ENCODE measurements at regions of chr1 and their contacts with region 1.

Region 1: GRCh38 chr1:207963427-207964194 is 52.7 kb upstream of the CD34 start:
- DNase-seq: peak; percentile 46
- H3K4me3 ChIP-seq: peak overlapping the region; percentile 63
- H3K27ac ChIP-seq: no peak overlapping the region
- H3K27me3 ChIP-seq: no peaks in the 10 kb centered on the region
- CTCF ChIP-seq: peak; percentile 84

Region 2: DNA sequence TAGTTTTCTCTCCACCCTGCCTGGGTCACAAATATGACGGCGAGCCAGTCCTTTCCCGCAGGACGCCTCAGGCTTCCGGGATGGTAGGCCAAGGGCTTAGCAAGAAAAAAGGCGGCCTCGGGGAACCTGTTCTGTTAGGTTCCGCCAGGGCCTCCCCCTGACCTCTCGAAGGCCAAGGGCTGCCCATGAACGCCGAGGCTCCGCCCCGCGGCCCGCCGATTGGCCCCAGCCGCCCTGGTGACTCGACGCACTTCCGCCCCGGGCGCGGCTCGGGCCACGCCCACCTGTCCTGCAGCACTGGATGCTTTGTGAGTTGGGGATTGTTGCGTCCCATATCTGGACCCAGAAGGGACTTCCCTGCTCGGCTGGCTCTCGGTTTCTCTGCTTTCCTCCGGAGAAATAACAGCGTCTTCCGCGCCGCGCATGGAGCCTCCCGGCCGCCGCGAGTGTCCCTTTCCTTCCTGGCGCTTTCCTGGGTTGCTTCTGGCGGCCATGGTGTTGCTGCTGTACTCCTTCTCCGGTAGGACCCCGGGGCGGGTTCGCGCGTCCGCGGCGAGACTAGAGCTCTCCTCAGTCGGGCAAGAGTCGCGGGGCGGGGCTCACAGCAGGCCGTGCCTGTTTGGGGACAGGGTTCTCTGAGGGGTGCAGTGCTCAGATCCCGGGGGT is 211.7 kb before region 1 on chr1 and contains the start of gene CD46:
- CTCF ChIA-PET with region 1: interaction called, 15 read pairs
- POLR2A ChIA-PET with region 1: no interaction called
- DNase-seq: peak; percentile 61
- H3K4me3 ChIP-seq: peak within 1 kb of the TSS; percentile 96
- H3K27ac ChIP-seq: peak within 1 kb of the TSS; percentile 61
- H3K27me3 ChIP-seq: no peaks in the 10 kb centered on the region
- CTCF ChIP-seq: no peak
- polyA plus RNA-seq, gene CD46: 112 and 148 TPM in 2 replicates

Region 3: DNA sequence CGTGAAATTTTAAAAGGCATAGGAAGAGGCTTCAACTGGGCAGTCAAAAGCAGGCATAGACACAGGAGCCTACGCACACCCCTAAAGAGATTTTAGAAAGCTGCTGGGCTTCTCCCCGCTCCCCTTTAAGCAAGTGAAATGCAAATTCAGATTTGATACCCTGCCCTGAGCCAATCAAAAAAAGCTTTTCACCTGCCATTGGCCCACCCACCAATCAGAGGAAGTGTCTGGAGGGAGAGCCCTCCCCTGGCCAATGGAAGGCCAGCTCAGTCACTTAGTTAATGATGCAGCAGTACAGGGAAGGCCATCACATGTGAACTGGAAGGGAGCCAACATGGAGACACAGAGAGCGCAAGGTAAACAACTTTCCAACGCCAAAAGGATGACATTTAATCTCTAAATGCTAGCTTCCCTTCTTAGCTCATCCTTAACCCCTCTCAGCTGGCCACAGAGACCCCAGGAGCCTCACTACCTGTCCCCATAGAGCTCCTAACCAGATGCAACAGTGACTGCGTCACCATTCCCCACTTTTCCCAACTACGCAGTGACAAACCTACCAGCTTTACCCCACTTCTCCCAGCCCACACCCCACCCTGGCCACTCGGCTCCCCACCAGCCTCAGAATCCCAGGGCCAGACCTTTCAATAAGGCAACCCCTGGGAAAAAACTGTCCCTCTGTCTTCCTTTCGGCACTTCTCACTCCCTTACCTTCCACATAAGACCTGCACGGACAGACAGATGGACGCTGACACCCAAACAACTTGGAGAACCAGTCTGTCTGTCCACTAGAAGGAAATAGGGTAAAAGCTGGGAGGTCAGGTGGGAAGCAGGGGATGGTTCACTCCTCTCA is 140.8 kb before region 1 on chr1:
- CTCF ChIA-PET with region 1: interaction called, 27 read pairs
- POLR2A ChIA-PET with region 1: no interaction called
- DNase-seq: no peak
- H3K4me3 ChIP-seq: no peak overlapping the region
- H3K27ac ChIP-seq: peak overlapping the region; percentile 21
- H3K27me3 ChIP-seq: no peaks in the 10 kb centered on the region
- CTCF ChIP-seq: no peak

Region 4: DNA sequence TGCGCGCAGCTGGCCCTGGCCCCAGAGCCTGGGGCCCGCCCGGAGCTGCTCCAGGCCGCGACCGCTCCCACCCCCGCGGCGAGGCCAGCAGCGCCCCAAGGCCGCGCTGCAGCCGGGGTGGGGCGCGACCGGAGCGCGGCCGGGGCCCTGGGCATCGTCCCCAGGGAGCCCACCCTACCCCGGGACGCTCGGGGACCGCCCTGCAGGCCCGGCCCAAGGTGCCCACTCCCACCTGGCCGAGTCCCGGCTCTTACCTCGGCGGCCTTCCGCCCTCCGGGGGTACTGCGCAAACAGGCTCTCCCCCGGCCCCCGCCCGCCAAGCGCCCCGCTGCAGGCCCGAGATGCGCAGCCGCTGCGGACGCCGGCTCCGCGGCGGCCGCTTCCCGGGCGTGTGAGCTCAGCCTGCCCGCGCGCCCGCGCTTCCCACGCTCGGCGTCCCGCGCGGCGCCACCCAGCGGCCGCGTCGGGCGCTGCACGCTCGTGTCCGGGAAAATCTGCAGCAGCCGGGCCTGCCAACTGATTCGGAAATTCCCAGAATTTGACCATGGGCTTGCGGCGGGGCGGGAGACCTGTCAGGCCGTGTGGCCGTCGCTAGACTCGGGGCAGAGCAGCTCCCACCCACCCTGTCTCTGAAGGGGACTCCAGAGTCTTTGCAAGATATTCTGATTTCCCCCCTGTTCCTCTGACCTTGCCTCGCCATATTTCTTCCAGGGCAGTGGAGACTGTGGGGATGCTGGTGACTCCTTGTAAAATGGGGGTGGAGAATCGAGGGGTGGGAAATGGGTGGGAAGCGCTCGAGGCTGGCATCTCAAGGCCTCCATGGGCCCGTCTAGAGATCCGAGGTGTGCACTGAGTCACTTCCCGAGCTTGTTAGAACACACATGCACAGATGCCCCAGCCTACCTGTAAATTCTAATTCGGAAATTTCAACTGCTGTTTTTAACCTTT is 94.6 kb before region 1 on chr1:
- CTCF ChIA-PET with region 1: interaction called, 36 read pairs
- POLR2A ChIA-PET with region 1: interaction called, 5 read pairs
- DNase-seq: no peak
- H3K4me3 ChIP-seq: peak overlapping the region; percentile 71
- H3K27ac ChIP-seq: no peak overlapping the region
- H3K27me3 ChIP-seq: no peaks in the 10 kb centered on the region
- CTCF ChIP-seq: peak; percentile 65

Region 5: GRCh38 chr1:207935166-207935583 is 28.4 kb before region 1 on chr1:
- CTCF ChIA-PET with region 1: interaction called, 39 read pairs
- POLR2A ChIA-PET with region 1: no interaction called
- DNase-seq: no peak
- H3K4me3 ChIP-seq: no peak overlapping the region
- H3K27ac ChIP-seq: no peak overlapping the region
- H3K27me3 ChIP-seq: peaks cover 2% of the 10 kb centered on the region
- CTCF ChIP-seq: no peak

Region 6: GRCh38 chr1:207997486-207998268 is 34.1 kb after region 1 on chr1:
- CTCF ChIA-PET with region 1: interaction called, 21 read pairs
- POLR2A ChIA-PET with region 1: no interaction called
- DNase-seq: peak; percentile 27
- H3K4me3 ChIP-seq: no peak overlapping the region
- H3K27ac ChIP-seq: no peak overlapping the region
- H3K27me3 ChIP-seq: peaks cover 10% of the 10 kb centered on the region
- CTCF ChIP-seq: peak; percentile 83

Region 7: DNA sequence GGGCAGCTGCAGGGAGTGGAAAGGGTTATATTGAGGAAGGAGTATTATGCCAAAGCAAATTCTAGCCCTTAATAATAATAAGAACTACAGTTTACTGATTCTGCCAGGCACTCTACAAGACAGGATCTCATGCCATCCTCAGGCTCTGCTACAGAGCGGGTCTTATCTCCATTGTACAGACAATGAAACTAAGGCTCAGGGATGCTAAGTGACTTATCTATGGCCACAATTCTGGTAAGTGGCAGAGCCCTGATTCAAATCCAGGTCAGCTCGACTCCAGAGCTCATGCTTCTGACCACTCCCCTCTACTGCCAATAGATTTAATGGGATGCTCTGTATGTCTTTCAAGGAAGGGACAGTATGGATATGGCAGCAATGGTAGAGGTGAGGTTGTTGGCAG is 93.4 kb after region 1 on chr1:
- CTCF ChIA-PET with region 1: no interaction called
- POLR2A ChIA-PET with region 1: no interaction called
- DNase-seq: no peak
- H3K4me3 ChIP-seq: no peak overlapping the region
- H3K27ac ChIP-seq: no peak overlapping the region
- H3K27me3 ChIP-seq: no peaks in the 10 kb centered on the region
- CTCF ChIP-seq: no peak

Region 8: GRCh38 chr1:208324005-208324404 is 360.4 kb after region 1 on chr1:
- CTCF ChIA-PET with region 1: interaction called, 13 read pairs
- POLR2A ChIA-PET with region 1: no interaction called
- DNase-seq: no peak
- H3K4me3 ChIP-seq: no peak overlapping the region
- H3K27ac ChIP-seq: no peak overlapping the region
- H3K27me3 ChIP-seq: no peaks in the 10 kb centered on the region
- CTCF ChIP-seq: no peak

Measured in AG04450 (cell line).